Astrocyte of the cerebellum (primary cell): ENCODE measurements at regions of chr4 and their contacts with region 1.

Region 1: DNA sequence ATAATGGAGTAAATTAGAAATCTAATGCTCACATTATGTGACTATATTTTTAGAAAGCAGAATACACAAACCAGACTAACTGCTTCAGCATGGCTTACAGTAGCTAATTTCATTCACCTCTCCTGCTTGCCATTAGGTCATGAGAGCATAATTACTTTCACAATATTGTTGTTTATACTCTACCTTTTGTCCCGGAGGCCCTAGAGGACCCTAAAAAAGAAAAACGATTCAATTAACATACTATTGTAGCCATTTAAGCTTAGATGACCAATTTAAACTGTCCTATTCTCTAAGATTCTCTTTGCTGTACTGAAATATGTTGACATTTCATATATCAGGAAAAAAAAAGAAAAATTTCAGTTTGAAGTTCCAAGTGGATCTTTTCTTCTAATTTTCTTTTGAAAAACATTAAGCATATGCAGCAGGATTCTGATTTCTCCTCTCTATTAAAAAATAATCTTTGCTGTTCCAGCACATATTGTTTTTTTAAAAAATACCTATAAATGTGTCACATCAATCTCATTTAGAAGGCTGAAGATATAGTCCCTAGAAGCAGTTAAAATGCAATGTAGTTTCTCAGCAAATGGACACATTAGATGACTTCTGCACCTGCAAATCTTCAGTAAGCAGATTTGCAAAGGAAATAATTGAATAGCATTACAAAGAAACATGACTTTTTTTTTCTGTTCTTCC is 157.7 kb upstream of the ETNPPL start:
- DNase-seq: no peak
- H3K4me3 ChIP-seq: no peak overlapping the region
- CTCF ChIP-seq: no peak

Region 2: DNA sequence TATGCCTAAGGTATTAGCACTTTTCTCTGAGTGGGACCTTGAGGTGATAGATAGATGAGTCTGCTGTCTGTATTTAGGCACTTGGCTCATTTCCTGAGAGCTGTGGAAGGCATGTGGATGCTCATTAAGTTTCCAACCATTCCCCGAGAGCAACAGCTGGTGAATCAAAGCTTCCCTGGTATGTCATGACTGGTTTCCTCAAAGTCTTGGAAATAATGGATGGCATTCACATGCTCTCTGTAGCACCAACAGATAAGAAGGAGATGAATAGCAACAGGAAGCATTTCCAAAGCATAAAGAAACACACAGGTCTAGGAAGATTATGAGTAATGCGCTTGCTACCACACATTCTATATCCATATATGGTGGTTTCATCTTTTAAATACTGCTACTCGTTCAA is 39.4 kb before region 1 on chr4:
- in situ Hi-C with region 1: loop called (anchors 5 kb)
- DNase-seq: peak; percentile 26
- H3K4me3 ChIP-seq: no peak overlapping the region
- CTCF ChIP-seq: no peak

Region 3: GRCh38 chr4:108979759-108980158 is 59.2 kb after region 1 on chr4:
- in situ Hi-C with region 1: no loop called
- DNase-seq: no peak
- H3K4me3 ChIP-seq: no peak overlapping the region
- CTCF ChIP-seq: no peak